Activated naive CD4-positive, alpha-beta T cell treated with anti-CD3 and anti-CD28 coated beads, Interleukin-2, amount 10 ng/mL, durations not matched to agents 7 days and 5 days (primary cell): ENCODE measurements at regions of chr6 and their contacts with region 1.

Region 1: GRCh38 chr6:130697995-130698535 is 129.1 kb upstream of the SMLR1 start:
- DNase-seq: peak; percentile 84
- H3K4me3 Mint-ChIP-seq: no peak overlapping the region
- H3K27ac Mint-ChIP-seq: peak overlapping the region; percentile 13
- H3K4me1 Mint-ChIP-seq: peaks cover 61% of the 10 kb centered on the region
- H3K27me3 Mint-ChIP-seq: no peaks in the 10 kb centered on the region

Region 2: DNA sequence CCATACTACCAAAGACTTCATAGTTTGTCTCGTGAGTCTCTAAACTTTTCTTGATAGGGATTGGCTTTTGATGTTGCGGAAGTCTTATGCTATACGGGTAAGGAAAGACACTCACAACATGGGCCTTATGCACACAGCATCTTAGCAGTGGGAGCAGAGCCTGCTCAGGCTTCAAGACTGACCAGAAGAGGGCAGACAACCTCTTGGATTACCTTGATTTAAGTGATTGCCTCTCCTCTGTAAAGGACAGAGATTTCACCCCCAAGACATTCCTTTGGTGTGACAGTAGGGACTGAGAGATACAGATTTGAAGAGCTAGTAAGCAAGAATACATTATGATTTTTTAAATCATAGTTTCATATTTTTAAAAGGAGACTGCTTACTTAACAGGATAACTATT is 404.3 kb before region 1 on chr6:
- CTCF ChIA-PET with region 1: interaction called, 12 read pairs
- DNase-seq: peak; percentile 60
- H3K4me3 Mint-ChIP-seq: no peak overlapping the region
- H3K27ac Mint-ChIP-seq: no peak overlapping the region
- H3K4me1 Mint-ChIP-seq: peaks cover 2% of the 10 kb centered on the region
- H3K27me3 Mint-ChIP-seq: peaks cover 4% of the 10 kb centered on the region

Region 3: GRCh38 chr6:130322673-130323268 is 375.3 kb before region 1 on chr6:
- CTCF ChIA-PET with region 1: interaction called, 41 read pairs
- DNase-seq: peak; percentile 68
- H3K4me3 Mint-ChIP-seq: no peak overlapping the region
- H3K27ac Mint-ChIP-seq: no peak overlapping the region
- H3K4me1 Mint-ChIP-seq: peaks cover 10% of the 10 kb centered on the region
- H3K27me3 Mint-ChIP-seq: peaks cover 14% of the 10 kb centered on the region

Region 4: GRCh38 chr6:130575971-130576370 is 122.1 kb before region 1 on chr6:
- CTCF ChIA-PET with region 1: interaction called, 16 read pairs
- DNase-seq: peak; percentile 84
- H3K4me3 Mint-ChIP-seq: peak overlapping the region; percentile 36
- H3K27ac Mint-ChIP-seq: peak overlapping the region; percentile 91
- H3K4me1 Mint-ChIP-seq: peaks cover 48% of the 10 kb centered on the region
- H3K27me3 Mint-ChIP-seq: no peaks in the 10 kb centered on the region